Activated B cell treated with CpG ODN at 0.5 μM for 24 hours (primary cell): ENCODE measurements at regions of chrX and their contacts with region 1.

Region 1: DNA sequence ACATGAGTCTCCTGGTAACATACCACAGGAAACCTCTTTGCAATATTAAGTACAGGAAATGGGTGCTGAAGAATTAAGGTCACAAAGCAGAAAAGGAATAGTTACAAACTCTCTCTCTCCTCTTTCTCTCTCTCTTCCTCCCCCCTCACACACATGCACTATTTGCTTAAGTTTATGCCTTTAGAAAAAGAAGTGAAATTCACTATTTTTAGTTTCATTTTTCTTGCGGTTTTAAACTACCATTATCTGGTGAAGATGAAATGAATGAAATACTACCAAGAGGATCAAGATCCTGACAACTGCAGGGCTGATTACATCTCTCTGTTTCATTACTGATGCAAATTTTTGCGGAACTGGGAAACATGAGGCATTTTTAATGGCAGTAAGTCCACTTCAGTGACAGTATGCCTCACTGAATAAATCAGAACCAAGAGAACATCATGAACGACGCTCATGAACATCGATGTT is 64.3 kb upstream of the FTHL17 start:
- DNase-seq: no peak
- ATAC-seq: peak; percentile 92
- H3K4me3 Mint-ChIP-seq: peak overlapping the region; percentile 67
- H3K27ac Mint-ChIP-seq: peak overlapping the region; percentile 65
- H3K4me1 Mint-ChIP-seq: peaks cover 31% of the 10 kb centered on the region
- H3K27me3 Mint-ChIP-seq: no peaks in the 10 kb centered on the region
- CTCF ChIP-seq: no peak

Region 2: GRCh38 chrX:30570505-30570904 is 565.7 kb before region 1 on chrX:
- CTCF ChIA-PET with region 1: no interaction called
- POLR2A ChIA-PET with region 1: interaction called, 3 read pairs
- intact Hi-C with region 1: loop called (anchors 10 kb)
- DNase-seq: no peak
- ATAC-seq: no peak
- H3K4me3 Mint-ChIP-seq: no peak overlapping the region
- H3K27ac Mint-ChIP-seq: no peak overlapping the region
- H3K4me1 Mint-ChIP-seq: peaks cover 57% of the 10 kb centered on the region
- H3K27me3 Mint-ChIP-seq: no peaks in the 10 kb centered on the region
- CTCF ChIP-seq: no peak

Region 3: DNA sequence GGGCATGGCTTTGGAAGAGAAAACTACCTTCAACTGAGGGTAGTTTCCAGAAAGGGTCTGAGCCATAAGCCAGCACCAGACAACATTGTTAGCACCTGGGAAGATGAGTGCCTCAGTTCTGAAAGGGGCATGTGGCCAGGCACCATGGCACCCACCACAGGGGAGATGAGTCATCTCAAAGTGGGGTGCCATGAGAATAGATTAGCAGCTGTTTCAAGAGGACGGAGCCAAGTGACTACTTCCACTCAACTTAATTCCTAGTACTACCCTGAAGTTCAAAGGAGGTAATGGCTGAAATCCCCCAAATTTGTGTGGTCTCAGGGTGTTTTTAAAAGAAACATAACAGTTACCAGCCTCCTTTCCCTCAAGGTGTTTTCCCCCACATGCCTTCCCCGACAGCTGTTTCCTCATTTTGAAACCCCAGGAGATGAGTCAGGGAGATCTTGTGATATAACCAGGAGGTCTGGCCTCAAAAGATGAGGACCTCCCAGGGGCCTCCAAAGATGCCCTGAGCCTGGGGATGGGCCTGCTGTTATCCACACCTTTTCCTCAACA is 36.6 kb before region 1 on chrX:
- CTCF ChIA-PET with region 1: no interaction called
- POLR2A ChIA-PET with region 1: no interaction called
- intact Hi-C with region 1: loop called (anchors 5 kb)
- DNase-seq: no peak
- ATAC-seq: peak; percentile 78
- H3K4me3 Mint-ChIP-seq: no peak overlapping the region
- H3K27ac Mint-ChIP-seq: peak overlapping the region; percentile 71
- H3K4me1 Mint-ChIP-seq: peaks cover 11% of the 10 kb centered on the region
- H3K27me3 Mint-ChIP-seq: no peaks in the 10 kb centered on the region
- CTCF ChIP-seq: no peak

Region 4: GRCh38 chrX:31168551-31168950 is 32.4 kb after region 1 on chrX:
- CTCF ChIA-PET with region 1: no interaction called
- POLR2A ChIA-PET with region 1: no interaction called
- intact Hi-C with region 1: loop called (anchors 1 kb)
- DNase-seq: no peak
- ATAC-seq: peak; percentile 90
- H3K4me3 Mint-ChIP-seq: peak overlapping the region; percentile 11
- H3K27ac Mint-ChIP-seq: peak overlapping the region; percentile 56
- H3K4me1 Mint-ChIP-seq: peaks cover 35% of the 10 kb centered on the region
- H3K27me3 Mint-ChIP-seq: no peaks in the 10 kb centered on the region
- CTCF ChIP-seq: no peak

Region 5: DNA sequence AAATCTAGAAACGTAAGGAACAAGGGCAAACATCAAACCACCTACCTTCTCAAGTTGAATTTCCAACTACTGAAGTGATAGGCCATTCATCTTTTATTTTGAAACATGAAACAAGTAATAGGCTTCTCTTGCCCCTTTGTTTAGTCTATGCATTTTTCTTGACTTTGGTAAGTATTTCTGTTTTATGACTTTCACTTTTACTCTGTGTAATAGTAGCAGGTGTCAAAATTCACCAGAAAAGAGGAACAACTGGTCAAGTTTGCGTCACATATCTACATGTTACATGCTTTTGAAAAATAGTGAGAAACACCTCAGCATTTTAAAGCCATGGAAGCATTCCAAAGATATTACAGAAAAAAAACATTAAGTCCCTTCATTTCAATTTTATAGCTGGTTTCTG is 92.7 kb after region 1 on chrX:
- CTCF ChIA-PET with region 1: no interaction called
- POLR2A ChIA-PET with region 1: interaction called, 4 read pairs
- intact Hi-C with region 1: loop called (anchors 1 kb)
- DNase-seq: no peak
- ATAC-seq: peak; percentile 86
- H3K4me3 Mint-ChIP-seq: peak overlapping the region; percentile 46
- H3K27ac Mint-ChIP-seq: peak overlapping the region; percentile 87
- H3K4me1 Mint-ChIP-seq: peaks cover 48% of the 10 kb centered on the region
- H3K27me3 Mint-ChIP-seq: no peaks in the 10 kb centered on the region
- CTCF ChIP-seq: no peak

Region 6: DNA sequence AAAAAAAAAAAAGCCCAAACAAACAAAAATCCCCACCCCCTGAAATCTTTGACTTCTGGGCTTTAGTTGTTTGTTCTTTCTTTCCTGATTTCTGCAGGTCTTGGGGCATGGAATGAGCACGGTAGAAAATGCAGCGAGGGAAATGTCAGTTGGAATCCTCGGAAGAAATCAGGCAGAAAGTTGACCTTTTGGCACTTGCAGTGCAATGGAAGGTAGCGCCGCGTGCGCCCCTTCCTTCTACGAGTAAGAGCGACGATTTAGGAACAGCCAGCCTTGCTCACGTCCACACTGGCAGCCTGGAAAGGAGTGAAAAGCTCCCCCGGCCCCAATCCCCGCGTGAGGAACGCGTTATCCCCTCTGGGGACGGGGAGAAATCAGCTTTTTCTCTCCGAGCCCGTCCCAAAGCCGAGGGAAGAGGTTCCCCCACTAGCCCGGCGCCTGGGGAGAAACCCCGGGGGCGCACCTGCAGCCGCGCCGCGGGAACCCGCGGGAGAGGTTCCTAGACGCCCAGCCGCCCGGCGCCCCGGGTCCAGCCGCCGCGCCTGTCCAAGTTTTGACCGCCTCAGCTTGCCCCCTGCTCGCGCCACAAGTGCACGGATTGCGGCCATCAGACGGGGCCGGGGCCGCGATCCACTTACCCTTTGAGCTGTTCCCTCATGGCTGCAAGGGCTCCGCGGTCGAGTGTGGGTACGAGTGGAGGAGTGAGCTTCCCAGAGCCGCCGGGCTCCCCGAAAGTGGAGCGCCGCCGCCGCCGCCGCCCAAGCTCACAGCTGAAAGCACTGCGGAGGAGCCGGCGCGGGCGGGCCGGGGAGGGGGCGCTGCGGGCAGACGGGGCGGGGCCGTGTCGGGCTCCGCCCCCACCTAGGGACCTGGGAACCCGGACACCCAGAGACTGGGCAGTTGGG is 130.2 kb after region 1 on chrX:
- CTCF ChIA-PET with region 1: no interaction called
- POLR2A ChIA-PET with region 1: no interaction called
- intact Hi-C with region 1: loop called (anchors 1 kb)
- DNase-seq: peak; percentile 43
- ATAC-seq: peak; percentile 94
- H3K4me3 Mint-ChIP-seq: peak overlapping the region; percentile 88
- H3K27ac Mint-ChIP-seq: peak overlapping the region; percentile 30
- H3K4me1 Mint-ChIP-seq: peaks cover 4% of the 10 kb centered on the region
- H3K27me3 Mint-ChIP-seq: no peaks in the 10 kb centered on the region
- CTCF ChIP-seq: no peak

Region 7: DNA sequence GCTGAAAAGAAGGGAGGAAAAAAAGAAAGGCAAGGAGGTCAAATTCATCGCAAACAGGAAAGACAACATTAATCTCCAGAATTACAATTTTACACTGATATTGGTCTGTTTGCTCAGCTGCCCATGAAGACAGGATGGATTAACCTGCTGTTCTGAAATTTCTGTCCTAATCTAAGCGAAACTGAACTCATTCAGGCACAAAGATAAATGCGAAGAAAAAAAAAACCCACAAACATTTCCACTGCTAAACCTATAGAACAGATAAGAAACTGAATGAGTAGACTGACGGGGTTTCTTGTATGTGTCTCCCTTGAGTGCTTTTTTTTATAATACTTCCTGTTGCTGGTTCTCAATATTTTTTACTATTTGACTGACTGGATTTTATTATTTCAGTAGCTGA is 187.5 kb after region 1 on chrX:
- CTCF ChIA-PET with region 1: no interaction called
- POLR2A ChIA-PET with region 1: no interaction called
- intact Hi-C with region 1: no loop called
- DNase-seq: no peak
- ATAC-seq: no peak
- H3K4me3 Mint-ChIP-seq: no peak overlapping the region
- H3K27ac Mint-ChIP-seq: no peak overlapping the region
- H3K4me1 Mint-ChIP-seq: peaks cover 6% of the 10 kb centered on the region
- H3K27me3 Mint-ChIP-seq: no peaks in the 10 kb centered on the region
- CTCF ChIP-seq: no peak